ENCODE measurements at regions of chr5 and their contacts with region 1.

Region 1: GRCh38 chr5:124741711-124742496 is 4.5 kb downstream of the ZNF608 start:
- DNase-seq: peak in 1 of 3 donors; percentile 70
- ATAC-seq: peak; percentile 72
- H3K4me3 ChIP-seq: no peak overlapping the region
- H3K4me1 ChIP-seq: peaks cover 47% of the 10 kb centered on the region
- CTCF ChIP-seq: no peak

Region 2: GRCh38 chr5:124704594-124705284 is 37.2 kb before region 1 on chr5:
- intact Hi-C with region 1: loop called (anchors 5 to 10 kb)
- DNase-seq: no peak
- ATAC-seq: peak; percentile 26
- H3K4me3 ChIP-seq: no peak overlapping the region
- H3K4me1 ChIP-seq: peaks cover 17% of the 10 kb centered on the region
- CTCF ChIP-seq: no peak

Region 3: GRCh38 chr5:124871303-124871702 is 129.4 kb after region 1 on chr5:
- intact Hi-C with region 1: no loop called
- DNase-seq: no peak
- ATAC-seq: no peak
- H3K4me3 ChIP-seq: no peak overlapping the region
- H3K4me1 ChIP-seq: no peaks in the 10 kb centered on the region
- CTCF ChIP-seq: no peak